Heart left ventricle (tissue), 16 donors: ENCODE measurements at regions of chr12 and their contacts with region 1.

Region 1: DNA sequence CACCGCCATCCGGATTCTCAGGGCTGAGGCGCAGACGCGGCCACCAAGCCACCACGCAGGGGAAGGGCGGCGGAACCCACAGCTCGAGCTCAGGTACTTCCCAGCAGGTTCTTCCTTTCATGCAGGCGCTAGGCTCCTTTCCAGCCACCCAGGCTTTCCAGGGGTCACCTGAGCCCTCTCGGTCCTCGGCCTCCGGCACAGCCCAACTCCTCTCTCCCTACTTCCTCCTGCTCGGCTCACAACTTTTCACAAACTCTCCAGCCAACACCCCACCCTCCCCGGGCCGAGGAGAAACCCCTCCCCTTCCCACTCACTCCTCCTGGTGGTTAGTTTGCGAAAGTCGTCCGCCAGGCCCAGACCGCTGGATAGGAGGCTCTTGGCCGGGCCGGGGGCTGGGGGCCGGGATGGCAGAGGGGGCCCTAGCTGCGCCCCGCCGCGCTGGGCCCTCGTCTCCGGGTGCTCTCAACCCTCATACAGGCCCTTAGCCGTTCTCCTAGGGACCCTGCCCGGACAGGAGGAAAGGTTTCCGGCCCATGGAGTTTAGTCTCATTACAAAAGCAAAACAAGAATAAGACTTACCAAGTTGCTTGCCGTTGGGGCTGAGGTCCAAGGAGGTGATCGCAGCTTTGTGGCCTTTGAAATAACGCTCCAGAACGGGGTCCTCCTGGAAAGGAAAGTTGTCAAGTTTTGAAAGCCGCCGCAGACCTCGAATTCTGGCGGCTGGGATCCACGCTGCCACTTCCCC is at the start of gene GALNT4:
- DNase-seq: peak; percentile 88 to 90 (median 89)
- ATAC-seq: peak; percentile 83 to 95 (median 93)
- H3K4me3 ChIP-seq: peak within 1 kb of the TSS; percentile 68 to 97 (median 92)
- H3K27ac ChIP-seq: peak within 1 kb of the TSS; percentile 74 to 95 (median 90)
- H3K4me1 ChIP-seq: peaks cover 6 to 53% (median 35%) of the 10 kb centered on the region in 12 donors
- H3K27me3 ChIP-seq: no peaks in the 10 kb centered on the region
- CTCF ChIP-seq: peak; percentile 56 to 81 (median 67)
- POLR2A ChIP-seq: peak in 1 of 2 donors; percentile 62
- total RNA-seq, gene GALNT4: 1.9 to 5.4 (median 2.5) TPM

Region 2: GRCh38 chr12:89019408-89020120 is 505.1 kb before region 1 on chr12:
- intact Hi-C with region 1: loop called (anchors 2 to 5 kb)
- DNase-seq: peak; percentile 52 to 77 (median 71)
- ATAC-seq: peak; percentile 91 to 98 (median 96)
- H3K4me3 ChIP-seq: peak overlapping the region in 9 of 12 donors; percentile 22 to 48 (median 35)
- H3K27ac ChIP-seq: no peak overlapping the region
- H3K4me1 ChIP-seq: peaks cover 0 to 10% (median 5%) of the 10 kb centered on the region in 12 donors
- H3K27me3 ChIP-seq: peaks cover 0 to 3% (median 0%) of the 10 kb centered on the region in 9 donors
- CTCF ChIP-seq: peak; percentile 72 to 89 (median 84)
- POLR2A ChIP-seq: no peak

Region 3: DNA sequence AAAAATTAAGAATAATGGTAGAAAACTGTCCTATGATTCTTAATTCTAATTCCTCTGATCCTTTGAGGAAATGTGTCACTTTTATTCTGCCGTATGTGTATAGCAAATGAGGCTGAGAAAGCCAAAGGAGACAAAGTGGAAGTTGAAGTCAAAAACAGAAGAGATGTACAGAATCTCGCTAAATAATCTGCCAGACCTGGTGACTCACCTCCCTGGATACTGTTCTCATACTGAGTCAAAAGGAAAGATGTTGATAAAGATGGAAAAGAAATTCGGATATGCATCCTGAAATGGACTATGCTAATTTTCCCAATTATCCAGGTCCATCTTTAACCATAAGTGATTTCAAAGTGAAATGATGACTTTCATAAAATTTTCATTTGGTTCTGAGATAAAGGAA is 264.9 kb before region 1 on chr12:
- intact Hi-C with region 1: loop called in 1 of 10 experiments (anchors 5 kb)
- DNase-seq: no peak
- ATAC-seq: no peak
- H3K4me3 ChIP-seq: no peak overlapping the region
- H3K27ac ChIP-seq: no peak overlapping the region
- H3K4me1 ChIP-seq: peaks cover 0 to 8% (median 0%) of the 10 kb centered on the region in 12 donors
- H3K27me3 ChIP-seq: no peaks in the 10 kb centered on the region
- CTCF ChIP-seq: no peak
- POLR2A ChIP-seq: no peak

Region 4: GRCh38 chr12:89352492-89353187 is 172.1 kb before region 1 on chr12 and contains the start of gene DUSP6:
- intact Hi-C with region 1: loop called in 6 of 10 experiments (anchors 2 to 10 kb)
- DNase-seq: peak; percentile 96 to 97 (median 96)
- ATAC-seq: peak; percentile 76 to 88 (median 84)
- H3K4me3 ChIP-seq: peak within 1 kb of the TSS; percentile 76 to 95 (median 86)
- H3K27ac ChIP-seq: peak within 1 kb of the TSS; percentile 96 to 100 (median 99)
- H3K4me1 ChIP-seq: peaks cover 0 to 52% (median 30%) of the 10 kb centered on the region in 12 donors
- H3K27me3 ChIP-seq: no peaks in the 10 kb centered on the region
- CTCF ChIP-seq: no peak
- POLR2A ChIP-seq: peak in 1 of 2 donors; percentile 58
- total RNA-seq, gene DUSP6: 11.4 to 66.7 (median 24.5) TPM

Region 5: DNA sequence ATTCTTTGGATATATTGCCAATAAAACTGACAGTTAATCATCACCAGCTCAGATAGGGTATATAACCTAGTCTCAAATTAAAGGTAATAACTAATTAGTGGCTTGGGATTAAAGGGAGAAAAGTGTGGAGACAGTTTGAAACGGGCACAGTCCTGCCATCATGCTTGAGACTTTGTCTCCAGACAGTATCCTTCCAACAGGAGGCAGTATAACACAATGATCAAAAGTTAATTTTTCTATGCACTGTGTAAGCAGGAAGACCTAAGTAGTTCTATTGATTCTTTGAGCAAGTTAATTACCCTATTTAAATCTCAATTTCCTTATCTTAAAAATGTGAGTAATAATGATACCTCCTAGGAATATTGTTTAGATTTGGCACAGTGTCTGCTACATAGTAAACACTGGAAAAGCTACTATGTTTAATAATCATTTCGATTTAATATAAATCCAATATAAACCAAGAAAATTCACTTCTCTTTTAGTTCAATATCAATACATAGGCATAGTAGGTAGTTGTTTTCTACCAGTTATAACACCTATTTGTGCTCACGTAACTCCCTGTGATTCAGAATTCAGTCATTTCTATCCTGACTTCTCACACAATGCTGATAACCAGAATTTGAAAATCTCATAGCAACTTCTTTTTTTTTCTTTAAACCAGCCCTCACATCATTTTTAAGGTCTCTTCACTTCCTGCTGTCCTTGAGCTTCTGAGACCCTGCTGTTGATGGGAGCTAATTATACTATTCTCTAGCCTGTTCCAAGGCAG is 53.8 kb before region 1 on chr12:
- intact Hi-C with region 1: loop called in 9 of 10 experiments (anchors 1 to 5 kb)
- DNase-seq: no peak
- ATAC-seq: peak; percentile 71 to 77 (median 74)
- H3K4me3 ChIP-seq: no peak overlapping the region
- H3K27ac ChIP-seq: no peak overlapping the region
- H3K4me1 ChIP-seq: peaks cover 0 to 19% (median 0%) of the 10 kb centered on the region in 12 donors
- H3K27me3 ChIP-seq: no peaks in the 10 kb centered on the region
- CTCF ChIP-seq: peak; percentile 47 to 74 (median 62)
- POLR2A ChIP-seq: no peak